Mammary epithelial cell (primary cell): ENCODE measurements at regions of chr15 and their contacts with region 1.

Region 1: GRCh38 chr15:83066734-83067637 is at the start of gene BTBD1:
- DNase-seq: peak; percentile 97
- H3K4me3 ChIP-seq: peak within 1 kb of the TSS; percentile 74 to 91 (median 83)
- H3K27ac ChIP-seq: peak within 1 kb of the TSS; percentile 79
- H3K4me1 ChIP-seq: peaks cover 18% of the 10 kb centered on the region
- H3K27me3 ChIP-seq: no peaks in the 10 kb centered on the region
- CTCF ChIP-seq: no peak
- total RNA-seq, gene BTBD1: 58.0 to 93.5 TPM

Region 2: GRCh38 chr15:83030021-83030420 is 37.0 kb before region 1 on chr15:
- CTCF ChIA-PET with region 1: no interaction called
- dilution Hi-C with region 1: no loop called
- in situ Hi-C with region 1: no loop called
- intact Hi-C with region 1: loop called (anchors 2 kb)
- DNase-seq: peak; percentile 35
- H3K4me3 ChIP-seq: no peak overlapping the region
- H3K27ac ChIP-seq: no peak overlapping the region
- H3K4me1 ChIP-seq: no peaks in the 10 kb centered on the region
- H3K27me3 ChIP-seq: no peaks in the 10 kb centered on the region
- CTCF ChIP-seq: no peak

Region 3: GRCh38 chr15:83129791-83130190 is 62.8 kb after region 1 on chr15:
- CTCF ChIA-PET with region 1: no interaction called
- dilution Hi-C with region 1: loop called (anchors 5 kb)
- in situ Hi-C with region 1: no loop called
- intact Hi-C with region 1: no loop called
- DNase-seq: no peak
- H3K4me3 ChIP-seq: no peak overlapping the region
- H3K27ac ChIP-seq: no peak overlapping the region
- H3K4me1 ChIP-seq: no peaks in the 10 kb centered on the region
- H3K27me3 ChIP-seq: no peaks in the 10 kb centered on the region
- CTCF ChIP-seq: no peak

Region 4: DNA sequence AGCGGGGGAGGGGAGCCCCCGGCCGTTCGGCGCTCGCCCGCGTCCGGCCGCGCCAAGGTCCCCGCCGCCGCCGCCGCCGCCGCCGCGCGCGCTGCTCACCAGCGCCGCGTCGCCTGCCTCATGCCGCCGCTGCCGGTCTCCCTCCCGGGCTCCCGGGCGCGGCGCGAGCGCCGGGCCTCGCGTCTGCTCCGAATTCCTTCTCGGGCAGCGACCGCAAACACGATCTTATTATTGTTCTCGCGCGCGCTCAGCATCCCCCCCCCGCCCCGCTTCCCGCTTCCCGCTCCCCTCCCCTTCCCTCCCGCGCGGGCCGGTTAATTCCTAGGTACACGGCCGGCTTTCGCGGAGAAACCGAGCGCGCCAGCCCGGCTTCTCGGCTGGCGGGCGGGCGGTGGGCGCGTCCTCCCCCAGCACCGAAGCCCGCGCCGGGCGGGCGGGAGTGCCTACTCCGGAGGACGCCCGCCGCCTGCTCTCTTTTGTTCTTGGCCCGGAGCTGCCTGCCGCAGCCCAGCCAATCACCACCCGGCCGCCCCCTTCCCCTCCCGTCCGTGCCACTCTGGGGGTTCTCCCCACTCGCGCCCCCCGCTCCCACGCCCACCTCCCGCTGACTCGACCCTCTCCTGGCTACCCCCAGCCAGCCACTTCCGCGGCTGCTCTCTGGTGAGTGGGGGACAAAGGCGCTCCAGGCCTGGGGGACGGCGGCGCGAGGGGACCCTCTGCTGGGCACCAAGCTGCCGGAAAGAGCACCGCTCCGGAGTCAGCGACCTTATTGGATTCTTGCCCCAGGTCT is 140.8 kb after region 1 on chr15 and contains the start of gene HDGFL3:
- CTCF ChIA-PET with region 1: no interaction called
- dilution Hi-C with region 1: no loop called
- in situ Hi-C with region 1: no loop called
- intact Hi-C with region 1: loop called (anchors 2 kb)
- DNase-seq: peak; percentile 57
- H3K4me3 ChIP-seq: peak within 1 kb of the TSS; percentile 84 to 88 (median 85)
- H3K27ac ChIP-seq: peak within 1 kb of the TSS; percentile 61
- H3K4me1 ChIP-seq: peaks cover 26% of the 10 kb centered on the region
- H3K27me3 ChIP-seq: no peaks in the 10 kb centered on the region
- CTCF ChIP-seq: peak in 1 of 2 donors; percentile 27
- total RNA-seq, gene HDGFL3: 22.7 to 79.2 TPM